ENCODE measurements at regions of chr18 and their contacts with region 1.

Region 1: DNA sequence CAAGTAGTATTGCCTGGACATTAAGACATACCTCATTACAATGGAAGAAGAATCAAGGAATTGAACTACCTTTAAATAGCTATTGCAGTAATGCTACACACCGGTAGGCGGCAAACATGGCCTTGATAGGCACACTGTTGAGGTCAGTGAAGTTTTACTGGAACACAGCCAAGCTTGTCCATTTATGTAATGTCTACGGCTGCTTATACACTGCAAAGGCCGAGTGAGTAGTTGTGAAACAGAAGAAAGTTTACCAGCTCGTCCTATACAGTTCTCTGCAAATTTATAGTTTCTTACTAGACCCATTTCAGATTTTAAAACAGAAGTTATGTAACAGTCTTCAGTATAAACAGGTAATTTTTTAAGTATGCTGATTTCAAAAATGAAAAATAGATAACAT is 38.8 kb downstream of the PPP4R1 start:
- DNase-seq: peak; percentile 51
- CTCF ChIP-seq: peak; percentile 37

Region 2: DNA sequence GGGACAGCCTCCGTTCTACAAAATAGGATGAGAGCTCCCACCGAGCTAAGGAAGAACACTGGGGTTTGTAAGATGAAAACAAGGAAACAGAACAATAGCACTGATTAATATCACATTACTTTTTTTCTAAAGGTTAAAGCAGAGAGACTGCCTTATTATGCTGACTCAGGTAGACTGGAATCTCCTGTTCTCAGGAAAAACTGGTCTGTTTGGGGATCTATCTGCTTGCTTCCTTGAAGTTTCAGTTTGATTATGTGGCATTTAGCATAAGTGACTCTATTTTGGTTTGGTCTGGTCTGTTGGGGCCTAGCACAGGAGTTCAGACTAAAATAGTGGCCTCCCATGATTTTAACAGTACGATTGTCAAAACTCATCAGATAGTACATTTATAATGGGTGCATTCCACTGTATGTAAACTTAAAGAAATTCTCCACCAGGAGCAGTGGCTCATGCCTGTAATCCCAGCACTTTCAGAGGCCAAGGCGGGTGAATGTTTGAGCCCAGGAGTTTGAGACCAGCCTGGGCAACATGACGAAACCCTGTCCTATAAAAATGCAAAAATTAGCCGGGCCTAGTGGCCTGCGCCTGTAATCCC is 537.2 kb before region 1 on chr18:
- CTCF ChIA-PET with region 1: no interaction called
- POLR2A ChIA-PET with region 1: no interaction called
- DNase-seq: no peak
- CTCF ChIP-seq: no peak

Region 3: GRCh38 chr18:9066817-9067306 is 508.7 kb before region 1 on chr18:
- CTCF ChIA-PET with region 1: no interaction called
- POLR2A ChIA-PET with region 1: no interaction called
- DNase-seq: peak; percentile 74
- CTCF ChIP-seq: no peak

Region 4: GRCh38 chr18:9561759-9562158 is 13.8 kb before region 1 on chr18:
- CTCF ChIA-PET with region 1: interaction called, 19 read pairs
- POLR2A ChIA-PET with region 1: no interaction called
- DNase-seq: no peak
- CTCF ChIP-seq: no peak

Region 5: GRCh38 chr18:9825571-9826073 is 250.1 kb after region 1 on chr18:
- CTCF ChIA-PET with region 1: no interaction called
- POLR2A ChIA-PET with region 1: no interaction called
- DNase-seq: no peak
- CTCF ChIP-seq: no peak

Measured in GM10248 (cell line).